WTC11 (cell line): ENCODE measurements at regions of chr1 and their contacts with region 1.

Region 1: DNA sequence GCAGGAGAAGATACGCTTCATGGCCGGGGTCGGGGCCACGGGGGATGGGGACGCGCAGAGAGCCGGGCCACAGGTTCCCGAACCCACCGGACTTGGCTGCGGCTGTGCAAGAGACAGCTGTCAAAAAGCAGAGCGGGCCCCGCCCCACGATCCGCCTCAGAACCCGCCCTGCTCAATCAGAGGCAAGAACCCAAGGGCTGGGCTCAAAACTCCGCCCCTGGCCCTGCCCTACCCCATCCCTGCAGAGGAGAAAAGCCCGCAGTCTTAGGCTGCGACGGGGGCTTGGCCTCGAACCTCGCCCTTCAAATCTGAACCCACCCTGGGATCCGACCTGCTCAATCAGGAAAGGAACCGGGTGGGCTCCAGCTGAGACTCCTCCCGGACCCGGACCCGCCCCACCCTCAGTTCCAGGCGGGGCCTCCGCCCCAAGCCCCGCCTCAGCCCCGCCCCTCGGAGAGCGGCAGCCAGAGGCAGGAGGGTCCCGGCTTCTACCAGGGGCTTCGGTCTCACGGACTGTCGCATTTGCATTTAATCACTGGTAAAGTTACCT is at the start of gene ANKRD35:
- DNase-seq: peak; percentile 93
- ATAC-seq: peak; percentile 97
- H3K4me3 Mint-ChIP-seq: peak within 1 kb of the TSS; percentile 79
- H3K27ac Mint-ChIP-seq: no peak within 1 kb of the TSS
- H3K4me1 Mint-ChIP-seq: peaks cover 15% of the 10 kb centered on the region
- H3K27me3 Mint-ChIP-seq: peaks cover 35% of the 10 kb centered on the region
- CTCF ChIP-seq: no peak
- total RNA-seq, gene ANKRD35: 2.7 to 3.2 TPM (median 2.9 TPM) in 3 replicates

Region 2: DNA sequence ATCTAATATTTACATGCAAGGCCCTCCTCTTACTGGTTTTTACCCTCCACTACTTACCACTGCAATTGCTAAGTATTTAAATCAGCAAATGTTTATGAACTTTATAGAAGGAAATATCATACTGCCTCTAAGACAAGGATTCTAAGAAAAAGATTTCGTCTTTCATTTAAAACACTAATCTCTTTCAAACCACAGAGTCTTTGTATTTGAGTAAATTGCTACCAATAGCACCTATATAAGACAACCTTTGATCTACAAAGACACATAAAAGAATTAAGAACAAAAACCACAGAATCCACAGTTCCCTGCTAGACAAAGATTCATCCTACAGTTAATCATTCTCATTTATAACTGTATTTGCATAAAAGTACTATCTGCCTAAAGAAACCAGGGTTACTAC is 99.5 kb before region 1 on chr1:
- CTCF ChIA-PET with region 1: no interaction called
- POLR2A ChIA-PET with region 1: no interaction called
- DNase-seq: no peak
- ATAC-seq: no peak
- H3K4me3 Mint-ChIP-seq: no peak overlapping the region
- H3K27ac Mint-ChIP-seq: no peak overlapping the region
- H3K4me1 Mint-ChIP-seq: peaks cover 6% of the 10 kb centered on the region; the same call in 1 of the 2 replicates
- H3K27me3 Mint-ChIP-seq: no peaks in the 10 kb centered on the region
- CTCF ChIP-seq: no peak

Region 3: DNA sequence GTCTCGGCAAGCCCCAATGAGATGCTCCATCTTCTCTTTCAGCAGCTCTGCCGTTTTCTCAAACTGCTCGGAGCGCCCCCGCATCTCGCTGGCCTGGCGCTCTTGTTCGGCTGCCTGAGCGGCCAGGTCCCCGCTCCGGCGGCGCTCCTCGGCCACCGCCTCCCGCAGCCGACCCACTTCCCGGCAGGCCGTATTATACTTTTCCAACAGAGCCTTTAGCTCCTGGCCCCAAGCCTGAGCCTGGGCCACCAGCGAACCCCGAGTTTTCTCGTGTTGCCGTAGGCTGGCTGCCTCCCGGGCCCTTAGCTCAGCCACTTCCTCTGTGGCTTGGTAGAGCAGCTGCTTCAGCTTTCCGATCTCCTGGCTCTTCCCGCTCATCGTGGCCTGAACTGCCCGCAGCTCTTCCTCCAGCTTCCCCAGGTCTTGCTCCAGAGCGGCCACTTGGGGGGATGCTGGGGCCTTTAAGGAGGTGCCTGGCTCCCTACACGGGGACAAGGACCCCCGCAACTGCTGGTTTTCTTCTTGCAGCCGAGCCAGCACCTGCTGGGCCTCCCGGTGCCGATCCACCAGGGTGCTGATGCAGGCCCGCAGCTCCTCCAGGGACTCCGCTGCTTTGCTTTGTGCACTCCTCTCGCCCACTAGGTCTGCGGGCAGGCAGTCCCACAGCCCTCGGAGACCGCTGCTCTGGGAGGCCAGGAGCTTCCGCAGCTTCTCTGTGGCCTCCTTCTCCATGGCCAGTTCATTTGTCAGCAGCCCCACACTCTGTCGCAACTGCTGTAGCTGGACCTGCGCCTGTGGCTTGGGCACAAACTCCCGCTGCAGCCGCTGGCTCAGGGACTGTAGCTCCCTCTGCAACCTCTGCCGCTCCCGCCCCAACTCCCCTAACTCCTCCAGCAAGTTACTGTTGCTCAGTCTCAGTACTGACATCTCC is 13.6 kb before region 1 on chr1:
- CTCF ChIA-PET with region 1: interaction called, 11 read pairs
- POLR2A ChIA-PET with region 1: interaction called, 4 read pairs
- DNase-seq: peak; percentile 57
- ATAC-seq: peak; percentile 76
- H3K4me3 Mint-ChIP-seq: peak overlapping the region; percentile 69
- H3K27ac Mint-ChIP-seq: no peak overlapping the region; the same call in 1 of the 2 replicates
- H3K4me1 Mint-ChIP-seq: peaks cover 37% of the 10 kb centered on the region
- H3K27me3 Mint-ChIP-seq: peaks cover 39% of the 10 kb centered on the region
- CTCF ChIP-seq: no peak

Region 4: DNA sequence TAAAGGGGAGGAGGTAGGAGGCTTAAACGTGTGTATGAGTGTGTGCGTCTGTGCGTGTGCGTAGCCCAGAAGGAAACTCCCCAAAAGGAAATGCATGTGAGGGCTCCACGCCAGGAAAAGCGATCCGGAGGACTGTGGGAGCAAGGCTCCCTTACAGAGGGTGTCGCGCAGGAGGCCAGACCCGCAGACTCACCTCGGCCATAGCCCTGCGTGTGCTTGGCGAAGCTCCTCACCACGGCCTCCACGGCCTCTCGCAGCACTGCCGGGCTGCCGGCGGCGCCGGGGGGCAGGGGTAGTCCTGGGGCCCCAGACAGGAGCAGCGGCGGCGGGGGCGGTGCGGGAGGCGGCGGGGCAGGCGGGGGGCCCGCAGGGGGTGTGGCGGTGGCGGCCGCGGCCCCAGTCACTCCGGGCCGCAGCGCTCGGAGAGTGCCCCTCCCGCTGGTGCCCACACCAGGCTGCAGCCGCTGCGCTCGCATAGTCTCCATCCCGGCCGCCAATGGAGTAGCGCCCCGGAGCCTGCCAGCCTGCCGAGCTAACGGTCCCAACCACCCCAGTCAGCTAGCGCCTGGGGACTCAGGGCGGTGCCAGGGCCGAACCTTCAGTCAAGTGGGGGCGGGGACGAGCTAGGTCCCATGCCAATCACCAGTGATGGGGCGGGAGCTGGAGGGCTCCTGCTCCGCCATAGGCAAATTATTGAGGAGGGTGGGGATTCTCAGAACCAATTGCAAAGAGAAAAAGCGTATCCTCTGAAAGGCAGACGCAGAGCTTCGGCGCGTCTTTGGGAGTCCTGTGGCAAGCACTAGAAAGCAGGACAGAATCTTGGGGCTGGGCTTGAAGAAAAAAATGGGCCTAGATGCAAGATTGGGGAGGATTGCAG is 71.9 kb after region 1 on chr1 and contains the start of gene LIX1L:
- CTCF ChIA-PET with region 1: no interaction called
- POLR2A ChIA-PET with region 1: no interaction called
- DNase-seq: peak; percentile 96
- ATAC-seq: peak; percentile 86
- H3K4me3 Mint-ChIP-seq: peak within 1 kb of the TSS; percentile 70
- H3K27ac Mint-ChIP-seq: peak within 1 kb of the TSS; percentile 14; the same call in 1 of the 2 replicates
- H3K4me1 Mint-ChIP-seq: peaks cover 31% of the 10 kb centered on the region
- H3K27me3 Mint-ChIP-seq: peaks cover 92% of the 10 kb centered on the region
- CTCF ChIP-seq: no peak
- total RNA-seq, gene LIX1L: 3.0 to 3.8 TPM (median 3.8 TPM) in 3 replicates